ENCODE measurements at regions of chr13 and their contacts with region 1.

Region 1: DNA sequence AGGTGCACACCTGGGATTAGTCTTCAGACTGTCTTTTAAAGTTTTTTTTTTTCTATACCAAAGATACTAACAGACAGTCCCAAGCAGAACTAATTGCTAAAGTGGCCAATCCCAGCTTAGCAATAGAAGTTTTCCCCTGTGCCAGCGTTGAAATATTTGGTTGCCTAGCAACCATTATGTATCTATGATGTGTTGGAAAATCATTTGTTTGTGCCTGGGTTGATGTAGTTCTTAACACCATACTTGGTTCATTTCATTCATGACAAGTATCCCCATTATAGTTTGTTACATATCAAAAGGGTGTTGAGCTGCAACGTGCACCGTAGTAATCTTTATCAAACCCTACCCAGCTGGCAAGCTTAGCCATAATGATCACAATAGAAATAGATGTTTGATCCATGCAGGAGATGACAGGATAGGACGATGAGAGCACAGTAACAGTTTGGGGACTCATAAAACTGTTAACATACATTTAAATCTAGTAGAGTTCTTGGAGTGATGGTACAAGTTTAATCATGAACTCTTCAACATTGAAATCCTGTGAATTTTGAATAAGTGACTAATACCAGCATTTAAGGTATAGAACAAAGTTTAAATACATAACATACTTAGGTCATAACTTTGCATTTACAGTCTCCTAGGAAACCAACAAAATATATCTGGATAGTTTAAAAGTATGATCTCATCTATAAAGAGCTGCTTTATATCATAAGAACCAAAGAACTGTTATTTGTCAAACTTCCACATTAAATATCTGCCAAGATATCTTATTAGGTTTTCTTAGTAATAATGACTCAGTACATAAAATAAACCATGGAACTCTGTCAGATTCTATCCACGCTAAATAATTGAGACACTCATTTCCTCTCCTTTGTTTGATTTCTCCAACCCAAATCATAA is 73.4 kb downstream of the MBNL2 start:
- DNase-seq: peak; percentile 27
- H3K4me3 Mint-ChIP-seq: no peak overlapping the region
- H3K27ac Mint-ChIP-seq: peak overlapping the region; percentile 83
- H3K4me1 Mint-ChIP-seq: peaks cover 45% of the 10 kb centered on the region
- H3K27me3 Mint-ChIP-seq: no peaks in the 10 kb centered on the region
- CTCF ChIP-seq: no peak

Region 2: GRCh38 chr13:97280478-97280877 is 15.1 kb before region 1 on chr13:
- CTCF ChIA-PET with region 1: interaction called, 3 read pairs
- POLR2A ChIA-PET with region 1: interaction called, 18 read pairs
- intact Hi-C with region 1: no loop called
- DNase-seq: peak; percentile 46
- H3K4me3 Mint-ChIP-seq: peak overlapping the region; percentile 16
- H3K27ac Mint-ChIP-seq: peak overlapping the region; percentile 81
- H3K4me1 Mint-ChIP-seq: peaks cover 63% of the 10 kb centered on the region
- H3K27me3 Mint-ChIP-seq: no peaks in the 10 kb centered on the region
- CTCF ChIP-seq: no peak

Region 3: DNA sequence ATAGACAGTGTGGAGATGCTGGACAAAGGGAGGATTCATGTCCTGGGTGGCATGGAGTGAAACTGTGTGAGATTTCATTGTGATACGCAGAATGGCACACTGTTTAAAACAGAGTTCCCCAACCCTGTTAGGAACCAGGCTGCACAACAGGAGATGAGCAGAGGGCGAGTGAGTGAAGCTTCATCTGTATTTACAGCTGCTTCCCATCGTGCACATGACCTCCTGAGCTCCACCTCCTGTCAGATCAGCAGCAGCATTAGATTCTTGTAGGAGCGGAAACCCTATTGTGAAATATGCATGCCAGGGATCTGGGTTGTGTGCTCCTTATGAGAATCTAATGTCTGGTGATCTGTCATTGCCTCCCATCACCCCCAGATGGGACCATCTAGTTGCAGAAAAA is 211.0 kb after region 1 on chr13:
- CTCF ChIA-PET with region 1: no interaction called
- POLR2A ChIA-PET with region 1: no interaction called
- intact Hi-C with region 1: no loop called
- DNase-seq: peak; percentile 62
- H3K4me3 Mint-ChIP-seq: no peak overlapping the region
- H3K27ac Mint-ChIP-seq: no peak overlapping the region
- H3K4me1 Mint-ChIP-seq: peaks cover 6% of the 10 kb centered on the region
- H3K27me3 Mint-ChIP-seq: peaks cover 17% of the 10 kb centered on the region
- CTCF ChIP-seq: no peak